ENCODE measurements at regions of chr11 and their contacts with region 1.

Region 1: GRCh38 chr11:46238967-46239800 is 38.3 kb upstream of the CREB3L1 start:
- DNase-seq: peak; percentile 85

Region 2: GRCh38 chr11:46121301-46121723 is 117.9 kb before region 1 on chr11 and contains the start of gene PHF21A:
- CTCF ChIA-PET with region 1: interaction called, 3 read pairs
- POLR2A ChIA-PET with region 1: interaction called, 13 read pairs
- DNase-seq: peak; percentile 78

Region 3: GRCh38 chr11:46278387-46279125 is 39.4 kb after region 1 on chr11:
- CTCF ChIA-PET with region 1: interaction called, 9 read pairs
- POLR2A ChIA-PET with region 1: interaction called, 26 read pairs
- DNase-seq: peak; percentile 70

Region 4: GRCh38 chr11:46295312-46296058 is 56.3 kb after region 1 on chr11:
- CTCF ChIA-PET with region 1: interaction called, 17 read pairs
- POLR2A ChIA-PET with region 1: interaction called, 68 read pairs
- DNase-seq: peak; percentile 93

Region 5: DNA sequence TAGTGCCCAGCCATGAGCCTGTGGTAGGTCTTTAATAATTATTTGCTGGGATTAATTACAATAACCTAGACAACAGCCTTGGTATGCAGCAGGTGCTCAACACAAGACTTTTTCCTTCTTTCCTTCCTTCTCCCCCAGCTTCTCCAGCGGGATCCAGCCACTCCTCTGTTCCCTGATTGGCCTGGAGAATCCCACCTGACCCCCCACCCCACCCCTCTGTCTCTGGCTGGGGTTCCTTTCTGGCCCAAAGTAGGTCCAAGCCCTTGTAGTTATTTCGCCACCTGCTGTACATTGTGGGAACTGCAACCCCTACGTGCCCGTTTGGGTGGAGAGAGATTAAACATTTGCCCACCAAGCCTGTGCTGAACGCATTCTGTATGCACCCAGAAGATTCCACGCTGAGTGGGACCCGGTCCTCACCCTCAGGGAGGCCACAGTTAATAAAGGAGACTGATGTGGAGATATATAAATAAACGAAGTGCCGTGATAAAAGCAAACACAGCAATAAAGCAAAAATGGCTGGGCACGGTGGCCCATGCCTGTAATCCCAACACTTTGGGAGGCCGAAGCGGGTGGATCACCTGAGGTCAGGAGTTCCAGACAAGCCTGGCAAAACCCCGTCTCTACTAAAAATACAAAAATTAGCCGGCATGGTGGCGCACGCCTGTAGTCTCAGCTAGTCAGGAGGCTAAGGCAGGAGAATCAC is 76.0 kb after region 1 on chr11:
- CTCF ChIA-PET with region 1: interaction called, 22 read pairs
- POLR2A ChIA-PET with region 1: interaction called, 38 read pairs
- DNase-seq: peak; percentile 90

Region 6: DNA sequence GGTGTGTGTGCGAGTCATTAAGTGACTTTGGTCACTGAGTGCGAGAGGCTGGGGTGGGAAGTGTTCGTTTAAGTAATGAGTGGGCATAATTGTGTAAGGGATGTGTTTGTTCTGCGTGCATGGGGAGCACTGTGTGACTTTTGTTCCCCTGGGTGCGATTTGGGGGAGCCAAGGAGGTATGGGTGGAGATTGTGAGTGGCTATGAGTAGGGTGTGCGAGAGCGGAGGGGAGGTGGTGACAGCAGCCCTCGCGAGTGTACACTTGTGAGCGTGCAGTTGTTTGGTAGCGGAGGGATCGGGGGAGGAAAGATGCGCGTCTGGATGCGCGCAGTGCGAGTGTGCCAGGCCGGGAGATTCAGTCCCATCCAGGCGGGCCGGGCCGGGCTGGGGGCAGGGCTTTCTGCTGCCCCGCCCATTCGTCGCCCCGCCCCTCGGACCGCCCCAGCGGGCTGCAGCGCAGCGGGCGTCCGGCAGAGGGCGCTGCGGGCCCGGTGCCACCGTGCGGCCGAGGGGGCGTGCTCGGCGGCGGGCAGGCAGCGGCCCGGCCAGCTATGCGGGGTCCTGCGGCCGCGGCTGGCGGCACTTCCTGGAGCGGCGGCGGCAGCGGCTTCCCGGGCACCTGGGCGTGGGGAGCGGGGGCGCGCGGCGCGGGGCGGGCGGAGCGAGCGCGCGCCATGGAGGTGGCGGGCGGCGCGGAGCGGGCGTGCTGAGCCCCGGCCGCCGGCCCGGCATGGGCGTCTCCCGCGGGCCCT is 107.9 kb after region 1 on chr11 and contains the start of gene DGKZ:
- CTCF ChIA-PET with region 1: interaction called, 3 read pairs
- POLR2A ChIA-PET with region 1: interaction called, 10 read pairs
- DNase-seq: peak; percentile 98

Region 7: DNA sequence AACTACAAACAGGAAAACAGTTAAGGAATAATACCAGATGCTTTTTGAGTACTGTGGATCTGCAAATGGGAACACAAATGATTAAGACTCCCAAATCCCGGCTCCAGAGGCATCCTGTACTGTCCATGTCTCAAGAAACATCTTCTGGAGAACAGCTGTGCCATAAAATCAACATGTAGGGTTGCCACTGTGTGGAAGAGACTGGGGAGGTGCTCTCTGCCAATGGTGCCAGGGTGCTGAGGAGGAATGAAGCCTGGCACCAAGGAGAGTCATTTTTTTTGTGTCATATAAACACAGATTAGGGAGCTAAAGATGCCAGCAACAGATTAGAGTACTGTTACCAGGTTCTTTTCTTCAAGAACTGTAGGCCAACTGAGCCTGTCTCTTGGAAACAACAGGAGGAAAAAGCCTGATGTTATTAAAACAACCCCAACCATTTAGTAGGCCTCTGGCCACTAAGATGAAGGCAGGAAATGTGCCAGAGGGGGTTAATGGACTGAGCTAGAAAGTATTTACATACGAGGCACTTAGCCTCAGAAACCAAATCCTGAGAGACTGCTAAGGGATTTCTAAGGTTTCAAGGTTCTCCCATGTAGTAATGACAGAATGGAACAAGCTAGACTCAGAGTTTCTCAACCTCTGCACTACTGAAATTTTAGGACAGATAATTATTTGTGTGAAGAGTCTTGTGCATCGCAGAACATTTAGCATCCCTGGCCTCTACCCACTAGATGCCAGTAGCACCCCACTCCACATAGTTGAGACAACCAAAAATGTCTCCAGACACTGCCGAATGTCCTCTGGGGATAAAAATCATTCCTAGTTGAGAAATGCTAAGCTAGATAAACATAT is 207.0 kb after region 1 on chr11:
- CTCF ChIA-PET with region 1: no interaction called
- POLR2A ChIA-PET with region 1: no interaction called
- DNase-seq: no peak